ENCODE measurements at regions of chr5 and their contacts with region 1.

Region 1: GRCh38 chr5:1118231-1118698 is 6.4 kb upstream of the SLC12A7 start:
- DNase-seq: peak in 3 of 4 experiments; percentile 58 to 68 (median 67)
- ATAC-seq: peak; percentile 62
- H3K4me3 ChIP-seq: no peak overlapping the region
- H3K27ac ChIP-seq: no peak overlapping the region
- H3K4me1 ChIP-seq: peaks cover 11 to 69% of the 10 kb centered on the region in 2 experiments
- H3K27me3 ChIP-seq: peaks cover 36 to 92% of the 10 kb centered on the region in 2 experiments
- CTCF ChIP-seq: no peak
- EP300 ChIP-seq: peak; percentile 32; the same call in 1 of the 2 replicates
- POLR2A ChIP-seq: no peak
- RAD21 ChIP-seq: no peak

Region 2: GRCh38 chr5:1021136-1021968 is 96.9 kb before region 1 on chr5:
- CTCF ChIA-PET with region 1: no interaction called
- POLR2A ChIA-PET with region 1: no interaction called
- in situ Hi-C with region 1: no loop called
- intact Hi-C with region 1: no loop called
- DNase-seq: no peak
- ATAC-seq: no peak; the same call in 2 of the 3 replicates
- H3K4me3 ChIP-seq: no peak overlapping the region
- H3K27ac ChIP-seq: no peak overlapping the region
- H3K4me1 ChIP-seq: no peaks in the 10 kb centered on the region; a peak in 2 of 5 replicates
- H3K27me3 ChIP-seq: peaks cover 40 to 48% of the 10 kb centered on the region in 2 experiments
- CTCF ChIP-seq: no peak
- EP300 ChIP-seq: no peak
- POLR2A ChIP-seq: no peak
- RAD21 ChIP-seq: no peak

Region 3: GRCh38 chr5:1068204-1068894 is 49.9 kb before region 1 on chr5:
- CTCF ChIA-PET with region 1: no interaction called
- POLR2A ChIA-PET with region 1: interaction called, 3 read pairs
- in situ Hi-C with region 1: no loop called
- intact Hi-C with region 1: loop called (anchors 5 kb)
- DNase-seq: peak in 1 of 4 experiments; percentile 45
- ATAC-seq: peak; percentile 50
- H3K4me3 ChIP-seq: no peak overlapping the region
- H3K27ac ChIP-seq: no peak overlapping the region
- H3K4me1 ChIP-seq: peaks cover 14 to 48% of the 10 kb centered on the region in 2 experiments; a peak in 4 of 5 replicates
- H3K27me3 ChIP-seq: peaks cover 0 to 38% of the 10 kb centered on the region in 2 experiments; a peak in 3 of 5 replicates
- CTCF ChIP-seq: no peak
- EP300 ChIP-seq: no peak
- POLR2A ChIP-seq: no peak
- RAD21 ChIP-seq: no peak

Region 4: GRCh38 chr5:1105350-1106265 is 12.7 kb before region 1 on chr5:
- CTCF ChIA-PET with region 1: no interaction called
- POLR2A ChIA-PET with region 1: interaction called, 18 read pairs
- in situ Hi-C with region 1: no loop called
- intact Hi-C with region 1: no loop called
- DNase-seq: peak; percentile 76 to 92 (median 85)
- ATAC-seq: peak; percentile 93
- H3K4me3 ChIP-seq: no peak overlapping the region
- H3K27ac ChIP-seq: 0 out of 3 replicates have a peak overlapping the region, but pooled peaks have one; percentile 9
- H3K4me1 ChIP-seq: peaks cover 50 to 100% of the 10 kb centered on the region in 2 experiments; a peak in 4 of 5 replicates
- H3K27me3 ChIP-seq: peaks cover 0 to 17% of the 10 kb centered on the region in 2 experiments; a peak in 3 of 5 replicates
- CTCF ChIP-seq: no peak
- EP300 ChIP-seq: peak; percentile 78; the same call in 1 of the 2 replicates
- POLR2A ChIP-seq: no peak
- RAD21 ChIP-seq: no peak

Region 5: GRCh38 chr5:1130218-1130946 is 12.1 kb after region 1 on chr5:
- CTCF ChIA-PET with region 1: no interaction called
- POLR2A ChIA-PET with region 1: interaction called, 13 read pairs
- in situ Hi-C with region 1: no loop called
- intact Hi-C with region 1: no loop called
- DNase-seq: no peak
- ATAC-seq: peak; percentile 21; the same call in 1 of the 3 replicates
- H3K4me3 ChIP-seq: no peak overlapping the region
- H3K27ac ChIP-seq: no peak overlapping the region
- H3K4me1 ChIP-seq: peaks cover 4 to 41% of the 10 kb centered on the region in 2 experiments; a peak in 4 of 5 replicates
- H3K27me3 ChIP-seq: peaks cover 29 to 62% of the 10 kb centered on the region in 2 experiments
- CTCF ChIP-seq: no peak
- EP300 ChIP-seq: no peak
- POLR2A ChIP-seq: no peak
- RAD21 ChIP-seq: no peak